ENCODE measurements at regions of chr11 and their contacts with region 1.

Region 1: DNA sequence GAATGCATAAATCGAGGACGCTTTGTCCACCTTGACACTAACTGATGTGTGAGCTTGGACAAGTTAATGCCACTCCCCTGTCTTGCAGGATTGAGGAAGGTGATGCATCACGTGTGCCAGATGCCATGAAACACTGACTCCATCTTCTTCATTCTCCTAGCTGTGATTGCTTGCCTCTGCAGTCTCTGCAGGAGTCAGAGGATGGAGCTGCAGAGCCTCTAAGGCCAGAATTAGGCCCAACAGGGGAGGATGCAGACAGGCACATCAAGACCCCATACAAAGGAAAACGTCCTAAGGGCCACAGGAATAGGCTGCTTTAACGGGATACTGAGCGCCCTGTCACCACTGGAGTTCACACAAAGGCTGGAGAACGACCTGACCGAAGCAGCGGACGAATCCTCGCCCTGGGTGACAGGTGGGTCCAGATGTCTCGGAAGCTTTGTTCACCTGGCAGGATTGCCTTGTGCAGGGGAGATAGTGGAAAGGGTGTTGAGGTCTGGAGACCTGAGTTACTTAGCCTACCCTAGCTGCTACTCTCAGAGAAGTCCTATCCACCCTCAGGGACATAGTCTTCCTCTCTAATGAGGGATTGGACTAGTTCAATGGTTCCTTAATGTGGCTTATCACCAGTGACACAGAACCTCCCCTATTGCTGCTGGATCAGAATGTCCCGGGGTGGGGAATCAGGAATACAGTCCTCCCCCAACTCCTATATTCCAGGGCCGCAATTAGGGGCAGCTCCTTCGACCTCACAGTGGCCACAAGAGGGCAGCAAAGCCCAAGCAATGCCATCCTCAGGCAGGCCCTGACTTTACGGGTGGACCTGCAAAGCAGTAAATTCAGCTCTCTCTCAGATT is 32.4 kb downstream of the DBX1 start:
- DNase-seq: peak; percentile 87
- H3K4me3 ChIP-seq: no peak overlapping the region
- H3K27ac ChIP-seq: no peak overlapping the region
- H3K4me1 ChIP-seq: peaks cover 0 to 8% (median 7%) of the 10 kb centered on the region in 4 donors
- H3K27me3 ChIP-seq: no peaks in the 10 kb centered on the region
- CTCF ChIP-seq: peak; percentile 47 to 82 (median 76)
- EP300 ChIP-seq: no peak
- POLR2A ChIP-seq: no peak

Region 2: GRCh38 chr11:20355221-20356219 is 227.6 kb after region 1 on chr11:
- intact Hi-C with region 1: loop called (anchors 2 kb)
- DNase-seq: no peak
- H3K4me3 ChIP-seq: no peak overlapping the region
- H3K27ac ChIP-seq: no peak overlapping the region
- H3K4me1 ChIP-seq: peaks cover 0 to 5% (median 3%) of the 10 kb centered on the region in 4 donors
- H3K27me3 ChIP-seq: no peaks in the 10 kb centered on the region
- CTCF ChIP-seq: peak in 1 of 4 experiments; percentile 48
- EP300 ChIP-seq: no peak
- POLR2A ChIP-seq: no peak

Measured in sigmoid colon (tissue), 7 donors.